ENCODE measurements at regions of chr10 and their contacts with region 1.

Region 1: DNA sequence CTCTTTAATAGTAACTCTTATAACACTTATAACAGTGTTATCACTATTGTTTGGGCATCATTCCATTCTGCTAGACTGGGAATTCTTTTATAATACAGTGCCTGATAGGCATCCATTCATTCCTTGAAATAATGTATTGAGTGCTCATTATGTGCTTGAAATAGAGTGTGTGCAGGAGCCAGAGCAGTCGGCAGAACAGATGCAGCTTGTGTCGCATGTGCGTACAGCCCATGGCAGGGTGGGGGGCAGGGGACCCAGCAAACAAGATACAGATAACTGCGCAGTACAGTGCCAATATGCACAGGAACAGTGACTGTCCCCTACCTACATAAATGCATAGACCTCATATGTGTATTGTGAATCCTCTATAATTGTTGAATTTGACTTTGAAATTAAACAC is 99.3 kb downstream of the KAT6B start:
- DNase-seq: no peak
- ATAC-seq: no peak
- H3K4me3 ChIP-seq: no peak overlapping the region
- H3K27ac ChIP-seq: no peak overlapping the region
- H3K4me1 ChIP-seq: peaks cover 27% of the 10 kb centered on the region
- H3K27me3 ChIP-seq: no peaks in the 10 kb centered on the region
- CTCF ChIP-seq: no peak
- EP300 ChIP-seq: no peak
- POLR2A ChIP-seq: no peak
- RAD21 ChIP-seq: no peak

Region 2: GRCh38 chr10:74913377-74913979 is 12.2 kb before region 1 on chr10:
- CTCF ChIA-PET with region 1: no interaction called
- POLR2A ChIA-PET with region 1: no interaction called
- in situ Hi-C with region 1: no loop called
- intact Hi-C with region 1: loop called (anchors 1 kb)
- DNase-seq: no peak
- ATAC-seq: no peak
- H3K4me3 ChIP-seq: no peak overlapping the region
- H3K27ac ChIP-seq: no peak overlapping the region
- H3K4me1 ChIP-seq: peaks cover 13% of the 10 kb centered on the region
- H3K27me3 ChIP-seq: no peaks in the 10 kb centered on the region
- CTCF ChIP-seq: no peak
- EP300 ChIP-seq: no peak
- POLR2A ChIP-seq: no peak
- RAD21 ChIP-seq: no peak

Measured in HepG2 (cell line).